CD4-positive, alpha-beta memory T cell (primary cell): ENCODE measurements at regions of chr3 and their contacts with region 1.

Region 1: GRCh38 chr3:49856181-49857005 is at the start of gene TRAIP:
- DNase-seq: peak; percentile 92 to 95 (median 93)
- H3K4me3 ChIP-seq: peak within 1 kb of the TSS; percentile 39 to 56
- H3K4me3 Mint-ChIP-seq: peak within 1 kb of the TSS; percentile 84 to 92 (median 88)
- H3K27ac ChIP-seq: peak within 1 kb of the TSS; percentile 56
- H3K27ac Mint-ChIP-seq: peak within 1 kb of the TSS; percentile 81 to 95 (median 93)
- H3K4me1 ChIP-seq: peaks cover 13% of the 10 kb centered on the region
- H3K4me1 Mint-ChIP-seq: peaks cover 3 to 11% (median 7%) of the 10 kb centered on the region in 4 donors
- H3K27me3 ChIP-seq: no peaks in the 10 kb centered on the region
- H3K27me3 Mint-ChIP-seq: no peaks in the 10 kb centered on the region
- total RNA-seq, gene TRAIP: 4.6 to 6.7 TPM

Region 2: DNA sequence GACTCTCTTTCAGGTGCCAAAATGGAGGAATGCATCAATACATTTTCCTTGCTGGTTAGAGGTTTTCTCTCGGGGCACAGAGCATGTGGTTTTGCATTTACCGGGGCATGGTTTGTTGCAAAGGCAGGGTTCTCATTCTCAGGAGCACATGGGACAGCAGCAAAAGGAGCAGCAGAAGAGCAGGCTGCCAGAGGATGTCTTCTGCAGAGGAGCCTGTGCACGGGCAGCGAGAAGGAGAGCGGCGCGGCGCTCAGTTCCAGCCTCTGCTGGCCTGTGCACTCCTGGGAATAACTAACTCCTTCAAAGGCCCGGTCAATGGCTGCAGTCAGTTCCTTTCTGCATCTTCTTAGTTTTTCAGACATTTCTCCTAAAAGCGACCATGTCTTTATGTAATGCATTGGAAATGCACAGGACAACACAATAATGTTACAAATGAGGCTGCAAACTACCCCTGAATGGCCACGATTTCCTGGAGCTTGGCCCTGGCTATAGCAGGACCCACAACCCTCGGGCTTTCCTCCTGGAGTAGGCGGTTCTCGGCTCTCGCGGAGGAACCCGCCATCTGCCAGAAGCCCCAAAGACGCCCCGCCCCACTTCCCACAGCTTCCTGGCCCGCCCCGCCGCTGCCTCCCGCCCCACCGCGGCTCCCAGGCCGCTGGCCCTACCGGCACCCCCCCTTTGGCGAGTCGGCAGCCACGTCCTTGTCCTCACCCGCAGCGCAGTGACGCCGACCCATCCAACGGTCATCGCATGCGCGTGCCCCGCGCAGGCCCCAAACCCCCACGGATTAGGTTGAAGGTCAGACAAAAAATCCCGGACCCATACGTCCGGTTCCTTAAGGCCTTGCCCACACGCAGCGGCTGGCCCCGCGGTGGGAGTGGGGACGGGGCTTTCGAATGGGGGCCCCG is 579.7 kb before region 1 on chr3 and contains the start of gene C3orf62:
- CTCF ChIA-PET with region 1: no interaction called
- POLR2A ChIA-PET with region 1: no interaction called
- intact Hi-C with region 1: no loop called
- DNase-seq: peak; percentile 56 to 72 (median 61)
- H3K4me3 ChIP-seq: peak within 1 kb of the TSS; percentile 44 to 67
- H3K4me3 Mint-ChIP-seq: peak within 1 kb of the TSS; percentile 78 to 90 (median 87)
- H3K27ac ChIP-seq: peak within 1 kb of the TSS; percentile 67
- H3K27ac Mint-ChIP-seq: peak within 1 kb of the TSS; percentile 77 to 94 (median 90)
- H3K4me1 ChIP-seq: peaks cover 17% of the 10 kb centered on the region
- H3K4me1 Mint-ChIP-seq: peaks cover 10 to 22% (median 19%) of the 10 kb centered on the region in 4 donors
- H3K27me3 ChIP-seq: no peaks in the 10 kb centered on the region
- H3K27me3 Mint-ChIP-seq: no peaks in the 10 kb centered on the region
- total RNA-seq, gene C3orf62: 9.8 to 9.9 TPM

Region 3: GRCh38 chr3:49786241-49786958 is 70.0 kb before region 1 on chr3 and contains the start of gene IP6K1:
- CTCF ChIA-PET with region 1: no interaction called
- POLR2A ChIA-PET with region 1: no interaction called
- intact Hi-C with region 1: loop called (anchors 5 kb)
- DNase-seq: peak; percentile 98 to 100 (median 99)
- H3K4me3 ChIP-seq: peak within 1 kb of the TSS; percentile 79 to 89
- H3K4me3 Mint-ChIP-seq: peak within 1 kb of the TSS; percentile 92 to 98 (median 92)
- H3K27ac ChIP-seq: peak within 1 kb of the TSS; percentile 89
- H3K27ac Mint-ChIP-seq: peak within 1 kb of the TSS; percentile 98 to 99 (median 99)
- H3K4me1 ChIP-seq: peaks cover 30% of the 10 kb centered on the region
- H3K4me1 Mint-ChIP-seq: peaks cover 18 to 47% (median 31%) of the 10 kb centered on the region in 4 donors
- H3K27me3 ChIP-seq: no peaks in the 10 kb centered on the region
- H3K27me3 Mint-ChIP-seq: peaks cover 0 to 2% of the 10 kb centered on the region in 2 donors
- total RNA-seq, gene IP6K1: 50.1 to 60.0 TPM

Region 4: GRCh38 chr3:49929331-49930240 is 73.2 kb after region 1 on chr3 and contains the start of gene MON1A:
- CTCF ChIA-PET with region 1: interaction called, 3 read pairs
- POLR2A ChIA-PET with region 1: no interaction called
- intact Hi-C with region 1: loop called (anchors 1 kb)
- DNase-seq: peak; percentile 76 to 87 (median 79)
- H3K4me3 ChIP-seq: peak within 1 kb of the TSS; percentile 95 to 98
- H3K4me3 Mint-ChIP-seq: peak within 1 kb of the TSS; percentile 81 to 88 (median 85)
- H3K27ac ChIP-seq: peak within 1 kb of the TSS; percentile 92
- H3K27ac Mint-ChIP-seq: peak within 1 kb of the TSS; percentile 76 to 94 (median 90)
- H3K4me1 ChIP-seq: peaks cover 23% of the 10 kb centered on the region
- H3K4me1 Mint-ChIP-seq: peaks cover 15 to 32% (median 26%) of the 10 kb centered on the region in 4 donors
- H3K27me3 ChIP-seq: no peaks in the 10 kb centered on the region
- H3K27me3 Mint-ChIP-seq: no peaks in the 10 kb centered on the region
- total RNA-seq, gene MON1A: 9.5 to 11.1 TPM